ENCODE measurements at regions of chr7 and their contacts with region 1.

Region 1: GRCh38 chr7:2680792-2681490 is 7.1 kb upstream of the AMZ1 start:
- DNase-seq: peak; percentile 62
- H3K4me3 ChIP-seq: no peak overlapping the region
- H3K27ac ChIP-seq: no peak overlapping the region
- H3K4me1 ChIP-seq: no peaks in the 10 kb centered on the region
- H3K27me3 ChIP-seq: no peaks in the 10 kb centered on the region
- CTCF ChIP-seq: peak in 3 of 4 experiments; percentile 68 to 77 (median 70)
- POLR2A ChIP-seq: no peak

Region 2: GRCh38 chr7:2451171-2452073 is 229.5 kb before region 1 on chr7:
- intact Hi-C with region 1: loop called (anchors 5 kb)
- DNase-seq: peak; percentile 71
- H3K4me3 ChIP-seq: peak overlapping the region; percentile 13 to 18
- H3K27ac ChIP-seq: no peak overlapping the region
- H3K4me1 ChIP-seq: peaks cover 4% of the 10 kb centered on the region
- H3K27me3 ChIP-seq: no peaks in the 10 kb centered on the region
- CTCF ChIP-seq: peak; percentile 64 to 93 (median 80)
- POLR2A ChIP-seq: no peak

Region 3: DNA sequence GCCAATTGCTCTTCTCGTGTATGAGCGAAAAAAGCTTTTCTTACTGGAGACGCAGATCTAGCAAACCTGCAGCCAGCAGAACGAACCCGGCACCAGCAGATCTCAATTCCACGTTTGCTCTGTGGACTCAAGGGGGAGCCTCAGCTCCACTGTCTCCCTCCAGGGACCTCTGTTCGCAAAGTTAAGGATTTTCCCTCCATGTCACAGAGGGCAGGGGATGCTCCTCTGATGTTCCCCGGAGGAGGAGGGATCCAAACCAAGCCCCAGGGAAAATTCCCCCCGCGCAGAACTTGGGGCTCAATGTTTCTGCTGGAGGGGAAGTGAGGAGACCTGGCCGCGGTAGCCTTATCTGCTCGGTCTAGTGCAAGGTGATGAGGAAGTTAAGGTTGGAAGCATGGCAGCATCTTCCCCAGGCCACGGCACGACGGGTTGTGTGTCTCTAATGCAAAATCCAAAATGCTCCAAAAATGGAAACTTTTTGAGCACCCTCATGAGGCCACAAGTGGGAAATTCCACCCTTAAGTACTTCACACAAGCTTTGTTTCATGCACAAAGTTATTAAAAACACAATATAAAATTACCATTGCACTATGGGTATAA is 113.2 kb before region 1 on chr7:
- intact Hi-C with region 1: loop called (anchors 5 kb)
- DNase-seq: no peak
- H3K4me3 ChIP-seq: no peak overlapping the region
- H3K27ac ChIP-seq: no peak overlapping the region
- H3K4me1 ChIP-seq: no peaks in the 10 kb centered on the region
- H3K27me3 ChIP-seq: no peaks in the 10 kb centered on the region
- CTCF ChIP-seq: peak in 3 of 4 experiments; percentile 23 to 45 (median 31)
- POLR2A ChIP-seq: no peak

Region 4: DNA sequence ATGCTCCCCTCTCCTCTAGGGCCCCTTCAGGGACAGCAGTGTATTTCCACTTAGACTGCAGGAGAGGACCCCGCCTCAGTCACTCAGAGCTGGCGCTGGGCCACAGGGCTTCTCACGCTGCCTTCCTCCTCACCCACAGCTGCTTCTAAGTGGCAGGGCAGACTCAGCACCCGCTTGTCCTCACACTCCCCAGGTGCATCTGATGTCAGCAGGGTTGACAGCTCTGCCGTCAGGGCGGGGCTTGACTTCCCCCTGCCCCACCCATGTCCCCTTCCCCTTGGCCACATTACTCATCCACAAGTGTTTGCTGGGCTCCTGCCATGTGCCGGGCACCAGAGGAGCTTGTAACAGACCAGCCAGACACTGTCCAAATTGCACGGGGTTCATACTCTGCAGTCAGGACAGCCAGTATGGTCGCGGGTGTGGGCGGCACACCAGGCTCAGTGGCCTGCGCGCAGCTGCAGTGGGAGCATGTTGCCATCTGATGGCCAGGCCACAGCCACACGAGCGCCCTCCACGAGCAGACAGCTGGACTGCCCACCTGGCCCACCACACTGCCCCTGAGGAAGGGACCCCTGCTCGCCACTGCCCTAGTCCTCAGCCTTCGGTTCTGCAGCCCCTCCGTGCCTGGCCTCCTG is 78.4 kb before region 1 on chr7:
- intact Hi-C with region 1: no loop called
- DNase-seq: no peak
- H3K4me3 ChIP-seq: no peak overlapping the region
- H3K27ac ChIP-seq: no peak overlapping the region
- H3K4me1 ChIP-seq: no peaks in the 10 kb centered on the region
- H3K27me3 ChIP-seq: no peaks in the 10 kb centered on the region
- CTCF ChIP-seq: no peak
- POLR2A ChIP-seq: no peak

Region 5: GRCh38 chr7:3162289-3162688 is 481.3 kb after region 1 on chr7:
- intact Hi-C with region 1: no loop called
- DNase-seq: no peak
- H3K4me3 ChIP-seq: no peak overlapping the region
- H3K27ac ChIP-seq: no peak overlapping the region
- H3K4me1 ChIP-seq: no peaks in the 10 kb centered on the region
- H3K27me3 ChIP-seq: no peaks in the 10 kb centered on the region
- CTCF ChIP-seq: no peak
- POLR2A ChIP-seq: no peak

Measured in prostate gland (tissue), 2 donors.